ENCODE measurements at regions of chr2 and their contacts with region 1.

Region 1: GRCh38 chr2:161954103-161954502 is 119.9 kb downstream of the DPP4 start:
- DNase-seq: peak in 7 of 9 donors; percentile 48 to 79 (median 73)
- ATAC-seq: peak; percentile 77
- H3K4me3 ChIP-seq: peak overlapping the region; percentile 12
- H3K4me3 Mint-ChIP-seq: peak overlapping the region in 9 of 10 donors; percentile 42 to 77 (median 60)
- H3K27ac ChIP-seq: no peak overlapping the region
- H3K27ac Mint-ChIP-seq: peak overlapping the region; percentile 19 to 88 (median 78)
- H3K4me1 ChIP-seq: peaks cover 47 to 63% of the 10 kb centered on the region in 2 donors
- H3K4me1 Mint-ChIP-seq: peaks cover 33 to 65% (median 51%) of the 10 kb centered on the region in 7 donors
- H3K27me3 ChIP-seq: no peaks in the 10 kb centered on the region
- H3K27me3 Mint-ChIP-seq: no peaks in the 10 kb centered on the region

Region 2: GRCh38 chr2:161160226-161161069 is 793.7 kb before region 1 on chr2 and contains the start of gene TANK:
- CTCF ChIA-PET with region 1: no interaction called
- POLR2A ChIA-PET with region 1: no interaction called
- intact Hi-C with region 1: loop called in 1 of 2 experiments (anchors 5 kb)
- DNase-seq: peak; percentile 72 to 90 (median 88)
- ATAC-seq: peak; percentile 96
- H3K4me3 ChIP-seq: peak within 1 kb of the TSS; percentile 75
- H3K4me3 Mint-ChIP-seq: peak within 1 kb of the TSS; percentile 95 to 100 (median 98)
- H3K27ac ChIP-seq: peak within 1 kb of the TSS; percentile 84
- H3K27ac Mint-ChIP-seq: peak within 1 kb of the TSS; percentile 95 to 99 (median 98)
- H3K4me1 ChIP-seq: peaks cover 19 to 39% of the 10 kb centered on the region in 2 donors
- H3K4me1 Mint-ChIP-seq: peaks cover 21 to 64% (median 60%) of the 10 kb centered on the region in 7 donors
- H3K27me3 ChIP-seq: no peaks in the 10 kb centered on the region
- H3K27me3 Mint-ChIP-seq: no peaks in the 10 kb centered on the region
- total RNA-seq, gene TANK: 57.4 to 142 (median 62.4) TPM

Region 3: GRCh38 chr2:161414042-161415033 is 539.8 kb before region 1 on chr2:
- CTCF ChIA-PET with region 1: no interaction called
- POLR2A ChIA-PET with region 1: no interaction called
- intact Hi-C with region 1: loop called in 1 of 2 experiments (anchors 5 kb)
- DNase-seq: peak in 1 of 9 donors; percentile 33
- ATAC-seq: peak; percentile 63
- H3K4me3 ChIP-seq: peak overlapping the region; percentile 43
- H3K4me3 Mint-ChIP-seq: peak overlapping the region; percentile 54 to 84 (median 74)
- H3K27ac ChIP-seq: no peak overlapping the region
- H3K27ac Mint-ChIP-seq: peak overlapping the region in 1 of 9 donors; percentile 32
- H3K4me1 ChIP-seq: peaks cover 23 to 31% of the 10 kb centered on the region in 2 donors
- H3K4me1 Mint-ChIP-seq: peaks cover 30 to 52% (median 50%) of the 10 kb centered on the region in 7 donors
- H3K27me3 ChIP-seq: peaks cover 7 to 38% of the 10 kb centered on the region in 2 donors
- H3K27me3 Mint-ChIP-seq: peaks cover 52 to 56% (median 53%) of the 10 kb centered on the region in 5 donors

Region 4: DNA sequence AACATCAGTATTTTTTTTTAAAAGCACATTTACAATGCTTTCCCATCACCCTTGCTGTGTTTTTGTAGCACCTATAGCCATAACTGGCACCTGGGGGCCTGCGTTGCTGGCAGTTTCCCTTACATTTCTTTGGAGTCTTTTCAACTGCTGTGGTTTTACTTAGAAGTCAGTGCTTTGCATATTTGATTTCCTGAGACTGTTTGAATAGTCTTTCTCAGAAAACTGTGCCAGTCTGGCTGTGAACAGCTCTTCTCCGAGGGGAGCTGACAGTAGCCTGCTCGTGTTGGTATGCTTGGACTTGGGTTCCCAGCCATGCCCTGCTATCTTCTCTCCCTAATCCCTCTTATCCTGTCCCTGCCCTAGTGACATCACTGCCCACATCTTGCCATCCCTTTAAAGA is 38.4 kb after region 1 on chr2:
- CTCF ChIA-PET with region 1: interaction called, 7 read pairs
- POLR2A ChIA-PET with region 1: interaction called, 4 read pairs
- intact Hi-C with region 1: loop called (anchors 1 kb)
- DNase-seq: peak in 8 of 9 donors; percentile 52 to 78 (median 72)
- ATAC-seq: peak; percentile 86
- H3K4me3 ChIP-seq: peak overlapping the region; percentile 46
- H3K4me3 Mint-ChIP-seq: peak overlapping the region; percentile 80 to 91 (median 86)
- H3K27ac ChIP-seq: peak overlapping the region; percentile 68
- H3K27ac Mint-ChIP-seq: peak overlapping the region; percentile 91 to 100 (median 97)
- H3K4me1 ChIP-seq: peaks cover 26 to 51% of the 10 kb centered on the region in 2 donors
- H3K4me1 Mint-ChIP-seq: peaks cover 35 to 78% (median 66%) of the 10 kb centered on the region in 7 donors
- H3K27me3 ChIP-seq: no peaks in the 10 kb centered on the region
- H3K27me3 Mint-ChIP-seq: no peaks in the 10 kb centered on the region

Region 5: GRCh38 chr2:162073888-162074645 is 120.0 kb after region 1 on chr2 and contains the start of gene DPP4:
- CTCF ChIA-PET with region 1: no interaction called
- POLR2A ChIA-PET with region 1: interaction called, 4 read pairs
- intact Hi-C with region 1: loop called (anchors 1 to 2 kb)
- DNase-seq: peak; percentile 31 to 68 (median 61)
- ATAC-seq: peak; percentile 88
- H3K4me3 ChIP-seq: peak within 1 kb of the TSS; percentile 95
- H3K4me3 Mint-ChIP-seq: peak within 1 kb of the TSS; percentile 92 to 100 (median 98)
- H3K27ac ChIP-seq: peak within 1 kb of the TSS; percentile 84
- H3K27ac Mint-ChIP-seq: peak within 1 kb of the TSS; percentile 86 to 98 (median 94)
- H3K4me1 ChIP-seq: peaks cover 0 to 28% of the 10 kb centered on the region in 2 donors
- H3K4me1 Mint-ChIP-seq: peaks cover 30 to 60% (median 52%) of the 10 kb centered on the region in 7 donors
- H3K27me3 ChIP-seq: no peaks in the 10 kb centered on the region
- H3K27me3 Mint-ChIP-seq: peaks cover 0 to 5% (median 0%) of the 10 kb centered on the region in 5 donors
- total RNA-seq, gene DPP4: 35.7 to 188 (median 41.6) TPM

Region 6: GRCh38 chr2:162343824-162344616 is 389.9 kb after region 1 on chr2 and contains the start of gene GCA:
- CTCF ChIA-PET with region 1: no interaction called
- POLR2A ChIA-PET with region 1: no interaction called
- intact Hi-C with region 1: loop called in 1 of 2 experiments (anchors 5 kb)
- DNase-seq: peak; percentile 96 to 99 (median 98)
- ATAC-seq: peak; percentile 99
- H3K4me3 ChIP-seq: peak within 1 kb of the TSS; percentile 87
- H3K4me3 Mint-ChIP-seq: peak within 1 kb of the TSS; percentile 78 to 96 (median 91)
- H3K27ac ChIP-seq: peak within 1 kb of the TSS; percentile 53
- H3K27ac Mint-ChIP-seq: peak within 1 kb of the TSS; percentile 70 to 92 (median 81)
- H3K4me1 ChIP-seq: peaks cover 4 to 5% of the 10 kb centered on the region in 2 donors
- H3K4me1 Mint-ChIP-seq: peaks cover 0 to 21% (median 19%) of the 10 kb centered on the region in 7 donors
- H3K27me3 ChIP-seq: no peaks in the 10 kb centered on the region
- H3K27me3 Mint-ChIP-seq: peaks cover 0 to 9% (median 0%) of the 10 kb centered on the region in 5 donors
- total RNA-seq, gene GCA: 10.9 to 56.3 (median 13.4) TPM